ENCODE measurements at regions of chr5 and their contacts with region 1.

Region 1: DNA sequence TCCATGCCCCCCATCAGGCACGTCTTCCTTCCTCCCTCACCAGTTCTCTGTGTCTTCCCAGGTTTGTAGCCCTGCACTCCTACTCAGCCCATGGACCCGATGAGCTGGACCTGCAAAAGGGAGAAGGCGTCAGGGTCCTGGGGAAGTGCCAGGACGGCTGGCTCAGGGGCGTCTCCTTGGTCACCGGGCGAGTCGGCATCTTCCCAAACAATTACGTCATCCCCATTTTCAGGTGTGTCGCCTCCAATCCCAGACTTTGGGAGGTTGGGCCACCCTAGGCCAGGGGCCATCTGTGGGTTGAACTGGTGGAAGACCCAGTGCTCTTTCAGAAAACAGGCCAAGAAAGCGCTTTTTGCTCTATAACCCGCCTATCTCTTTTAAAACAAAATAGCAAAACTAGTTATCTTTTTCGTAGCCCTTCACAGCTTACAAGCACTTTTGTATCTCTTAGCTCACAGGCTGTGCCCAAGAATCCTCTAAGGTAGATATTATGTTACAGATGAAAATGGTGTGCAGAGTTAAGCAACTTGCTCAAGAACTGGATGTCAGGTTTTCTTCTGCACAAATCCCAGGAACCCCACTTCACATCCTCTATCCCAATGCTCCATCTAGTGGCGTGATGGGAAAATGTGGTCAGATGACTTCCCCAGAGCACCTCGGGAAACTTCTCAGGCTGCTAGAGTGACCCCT is 56.2 kb downstream of the PLAC8L1 start:
- DNase-seq: peak in 6 of 10 donors; percentile 8 to 50 (median 48)
- H3K4me3 ChIP-seq: no peak overlapping the region
- H3K27ac ChIP-seq: no peak overlapping the region
- H3K27me3 ChIP-seq: no peaks in the 10 kb centered on the region
- CTCF ChIP-seq: peak; percentile 49 to 83 (median 71)

Region 2: DNA sequence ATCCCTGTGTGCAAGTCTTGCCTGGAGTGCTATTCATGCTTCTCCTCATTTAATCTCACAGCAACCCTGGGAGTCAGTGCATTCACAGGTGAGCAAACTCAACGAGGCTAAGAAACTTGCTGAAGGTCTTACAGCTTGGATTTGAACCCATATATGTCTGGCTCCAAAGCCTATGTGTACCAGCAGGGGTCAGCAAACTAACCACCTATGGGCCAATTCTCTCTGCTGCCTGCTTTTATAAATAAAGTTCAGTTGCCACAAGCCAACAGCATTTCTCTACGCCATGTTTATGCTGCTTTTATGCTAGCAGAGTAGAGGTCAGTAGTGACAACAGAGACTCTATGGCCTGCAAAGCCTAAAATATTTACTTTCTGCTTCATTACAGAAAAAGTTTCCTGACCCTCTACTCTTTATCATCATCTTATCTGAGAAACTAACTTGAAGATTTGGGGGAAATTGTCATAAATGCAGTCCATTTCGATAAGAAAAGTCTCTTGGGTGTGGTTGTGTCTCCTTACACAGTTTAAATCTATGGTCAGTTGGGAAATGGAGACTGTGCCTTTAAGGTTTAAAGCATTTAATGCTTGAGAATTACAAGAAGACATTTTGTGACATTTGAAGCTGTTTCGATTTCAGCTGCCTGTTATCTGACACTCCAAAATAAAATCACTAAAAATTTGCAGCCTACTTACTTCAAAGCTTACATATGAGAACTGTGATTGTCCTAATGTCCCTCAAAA is 351.7 kb before region 1 on chr5:
- intact Hi-C with region 1: no loop called
- DNase-seq: no peak
- H3K4me3 ChIP-seq: no peak overlapping the region
- H3K27ac ChIP-seq: no peak overlapping the region
- H3K27me3 ChIP-seq: no peaks in the 10 kb centered on the region
- CTCF ChIP-seq: peak in 33 of 56 donors; percentile 9 to 44 (median 28)

Region 3: GRCh38 chr5:146130440-146131045 is 81.4 kb after region 1 on chr5:
- intact Hi-C with region 1: loop called in 1 of 2 experiments (anchors 2 kb)
- DNase-seq: no peak
- H3K4me3 ChIP-seq: no peak overlapping the region
- H3K27ac ChIP-seq: peak overlapping the region in 2 of 59 donors; percentile 28 to 54
- H3K27me3 ChIP-seq: no peaks in the 10 kb centered on the region
- CTCF ChIP-seq: peak; percentile 53 to 91 (median 74)

Measured in dorsolateral prefrontal cortex (tissue), 120 donors.